PC-9 (cell line): ENCODE measurements at regions of chr11 and their contacts with region 1.

Region 1: GRCh38 chr11:128448200-128448886 is 139.0 kb downstream of the ETS1 start:
- DNase-seq: peak; percentile 81 to 98
- H3K4me3 ChIP-seq: peak overlapping the region; percentile 38; the same call in 1 of the 2 replicates
- H3K27ac ChIP-seq: peak overlapping the region; percentile 96
- H3K4me1 ChIP-seq: peaks cover 24% of the 10 kb centered on the region
- H3K27me3 ChIP-seq: no peaks in the 10 kb centered on the region
- CTCF ChIP-seq: no peak

Region 2: DNA sequence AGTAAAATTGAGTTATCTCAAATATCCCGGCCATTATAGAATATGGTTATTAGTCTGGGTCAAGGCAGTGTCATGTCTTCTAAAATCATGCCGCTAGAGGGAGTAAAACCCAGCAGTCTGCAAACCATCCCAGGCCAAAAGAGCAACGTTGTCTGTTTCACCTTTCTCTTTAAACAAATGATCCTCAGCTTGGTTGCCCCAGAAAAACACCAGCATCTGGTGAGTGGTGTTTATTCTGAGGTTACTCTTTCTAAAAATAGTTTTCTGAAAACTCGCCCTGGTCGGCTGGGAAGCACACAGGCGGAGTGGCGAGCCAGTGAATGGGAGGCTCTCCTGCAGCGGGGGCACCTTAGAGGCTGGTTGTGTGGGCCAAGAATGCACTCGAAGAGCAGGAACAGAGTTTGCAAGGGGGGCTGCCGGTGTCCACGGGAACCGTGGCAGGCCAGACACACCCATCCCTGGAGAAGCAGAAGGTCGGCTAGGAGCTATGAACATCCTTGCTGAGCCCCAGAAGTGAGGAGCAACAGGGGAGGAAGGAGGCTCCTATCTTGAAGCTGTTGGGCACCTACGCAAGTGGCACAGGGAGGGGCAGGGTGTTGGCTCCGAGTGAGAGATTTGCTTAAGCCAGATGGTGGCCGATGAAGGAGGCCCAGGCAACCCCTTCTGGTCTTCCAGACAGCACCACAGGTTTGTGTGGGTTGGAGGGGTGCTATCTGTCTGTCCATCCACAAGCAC is 158.1 kb before region 1 on chr11:
- CTCF ChIA-PET with region 1: no interaction called
- POLR2A ChIA-PET with region 1: no interaction called
- intact Hi-C with region 1: loop called (anchors 1 kb)
- DNase-seq: peak; percentile 45 to 58
- H3K4me3 ChIP-seq: no peak overlapping the region
- H3K27ac ChIP-seq: no peak overlapping the region
- H3K4me1 ChIP-seq: peaks cover 18% of the 10 kb centered on the region
- H3K27me3 ChIP-seq: no peaks in the 10 kb centered on the region
- CTCF ChIP-seq: peak; percentile 93

Region 3: DNA sequence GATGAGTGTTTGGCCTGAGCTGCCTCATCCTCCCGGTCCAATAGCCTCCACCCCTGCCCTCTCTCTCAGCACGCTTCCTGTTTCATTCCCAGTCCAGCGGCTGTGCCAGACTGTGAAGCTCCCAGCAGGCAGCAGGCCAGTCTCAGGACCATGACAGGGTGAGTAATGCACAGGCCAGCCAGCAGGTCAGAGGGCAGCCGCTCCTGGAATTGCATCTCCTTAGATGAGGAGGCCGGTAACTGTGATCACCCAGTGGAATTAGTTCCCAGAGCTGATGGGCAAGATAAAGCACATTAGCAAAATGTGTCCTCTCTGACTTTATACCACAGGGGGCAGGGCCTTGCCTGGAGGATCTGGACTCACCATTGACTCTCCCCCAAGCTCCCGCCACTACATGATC is 112.1 kb before region 1 on chr11:
- CTCF ChIA-PET with region 1: no interaction called
- POLR2A ChIA-PET with region 1: no interaction called
- intact Hi-C with region 1: loop called (anchors 1 kb)
- DNase-seq: peak; percentile 88 to 98
- H3K4me3 ChIP-seq: no peak overlapping the region
- H3K27ac ChIP-seq: 0 out of 2 replicates have a peak overlapping the region, but pooled peaks have one; percentile 40
- H3K4me1 ChIP-seq: peaks cover 19% of the 10 kb centered on the region
- H3K27me3 ChIP-seq: no peaks in the 10 kb centered on the region
- CTCF ChIP-seq: peak; percentile 22; the same call in 1 of the 2 replicates

Region 4: DNA sequence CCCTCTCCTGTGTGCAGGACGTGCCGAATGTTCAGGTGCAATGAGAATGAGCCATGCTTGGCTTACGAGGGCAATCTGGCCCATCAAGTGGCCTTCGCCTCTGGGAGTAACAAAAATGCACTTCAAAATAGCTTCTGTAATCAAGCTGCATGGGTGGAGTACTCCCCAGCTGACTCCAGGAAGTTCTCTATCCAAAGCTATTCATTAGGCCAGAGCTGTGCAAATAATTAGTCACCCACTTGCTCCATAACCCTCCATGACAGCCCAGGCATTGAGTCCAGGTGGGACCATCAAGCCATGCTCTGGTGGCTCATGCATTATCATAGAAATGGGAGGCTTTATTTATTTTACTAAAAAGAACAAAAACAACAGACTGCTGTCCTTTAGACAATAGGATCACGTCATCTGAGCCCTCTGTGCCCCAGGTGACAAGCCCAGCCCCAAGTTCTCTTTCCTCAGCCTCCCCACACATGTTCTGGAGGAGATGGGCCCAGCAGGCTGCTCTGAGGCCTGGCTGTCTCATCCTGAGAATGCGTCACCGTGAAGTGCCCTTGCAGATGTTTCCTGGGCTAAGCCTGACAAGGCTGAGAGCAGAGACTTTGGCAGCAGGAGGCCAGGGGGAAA is 105.7 kb before region 1 on chr11:
- CTCF ChIA-PET with region 1: interaction called, 3 read pairs
- POLR2A ChIA-PET with region 1: no interaction called
- intact Hi-C with region 1: loop called (anchors 1 kb)
- DNase-seq: peak; percentile 58 to 99
- H3K4me3 ChIP-seq: no peak overlapping the region
- H3K27ac ChIP-seq: peak overlapping the region; percentile 71
- H3K4me1 ChIP-seq: peaks cover 34% of the 10 kb centered on the region
- H3K27me3 ChIP-seq: no peaks in the 10 kb centered on the region
- CTCF ChIP-seq: no peak

Region 5: DNA sequence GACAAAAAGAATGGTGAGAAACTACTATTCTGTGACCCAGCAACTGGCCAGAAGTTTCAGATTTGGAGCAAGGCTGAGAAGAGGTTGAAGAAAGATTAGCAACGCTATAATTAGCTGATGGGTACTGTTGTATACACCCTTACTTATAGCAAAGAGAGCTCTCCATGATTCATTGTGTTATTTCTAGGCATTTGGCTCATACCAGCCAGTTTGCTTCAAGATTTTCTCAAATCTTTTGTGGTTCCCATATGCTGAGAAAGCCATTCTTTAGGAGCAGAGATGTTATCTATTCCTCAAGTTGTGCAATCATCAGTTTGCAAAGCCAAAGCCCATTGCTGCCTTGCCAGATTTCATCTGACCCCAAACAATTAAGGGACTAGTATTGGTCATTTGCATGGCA is 40.4 kb before region 1 on chr11:
- CTCF ChIA-PET with region 1: no interaction called
- POLR2A ChIA-PET with region 1: interaction called, 3 read pairs
- intact Hi-C with region 1: loop called (anchors 2 kb)
- DNase-seq: peak; percentile 27 to 91
- H3K4me3 ChIP-seq: no peak overlapping the region
- H3K27ac ChIP-seq: peak overlapping the region; percentile 44
- H3K4me1 ChIP-seq: peaks cover 30% of the 10 kb centered on the region
- H3K27me3 ChIP-seq: no peaks in the 10 kb centered on the region
- CTCF ChIP-seq: no peak

Region 6: GRCh38 chr11:128424851-128425285 is 23.5 kb before region 1 on chr11:
- CTCF ChIA-PET with region 1: no interaction called
- POLR2A ChIA-PET with region 1: no interaction called
- intact Hi-C with region 1: no loop called
- DNase-seq: no peak
- H3K4me3 ChIP-seq: no peak overlapping the region
- H3K27ac ChIP-seq: no peak overlapping the region
- H3K4me1 ChIP-seq: no peaks in the 10 kb centered on the region
- H3K27me3 ChIP-seq: no peaks in the 10 kb centered on the region
- CTCF ChIP-seq: no peak

Region 7: GRCh38 chr11:128497061-128497775 is 48.9 kb after region 1 on chr11:
- CTCF ChIA-PET with region 1: no interaction called
- POLR2A ChIA-PET with region 1: no interaction called
- intact Hi-C with region 1: loop called (anchors 5 kb)
- DNase-seq: peak; percentile 80 to 97
- H3K4me3 ChIP-seq: peak overlapping the region; percentile 49; the same call in 1 of the 2 replicates
- H3K27ac ChIP-seq: peak overlapping the region; percentile 99
- H3K4me1 ChIP-seq: peaks cover 79% of the 10 kb centered on the region
- H3K27me3 ChIP-seq: no peaks in the 10 kb centered on the region
- CTCF ChIP-seq: no peak